ENCODE measurements at regions of chr12 and their contacts with region 1.

Region 1: DNA sequence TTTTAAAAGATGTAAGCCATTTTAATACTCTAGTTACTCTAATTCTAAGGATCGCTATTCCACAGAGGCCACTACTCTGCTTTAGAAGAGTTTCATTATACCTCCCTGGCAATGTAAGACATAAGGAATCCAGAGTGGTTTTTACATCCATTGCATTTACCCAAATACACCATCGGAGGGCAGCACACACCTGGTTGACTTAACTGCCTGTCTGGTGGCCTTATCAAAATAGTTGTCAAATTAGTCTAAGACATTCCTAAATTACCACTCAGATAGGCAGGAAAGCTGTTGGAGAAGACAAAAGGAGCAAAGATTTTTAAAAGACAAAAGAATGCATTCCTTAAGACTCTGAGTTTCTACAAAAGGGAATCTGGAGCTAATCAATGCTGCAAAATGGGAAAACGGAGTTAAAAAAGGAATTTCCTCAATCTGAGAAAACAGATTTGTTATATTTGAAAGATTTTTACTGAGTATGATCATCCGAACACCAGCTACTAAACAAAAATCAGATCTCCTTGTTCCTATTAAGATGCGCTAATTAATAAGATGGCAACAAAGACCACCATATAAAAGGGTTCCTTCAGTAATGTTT is 33.8 kb upstream of the FGD4 start:
- DNase-seq: peak; percentile 68
- H3K4me3 Mint-ChIP-seq: no peak overlapping the region
- H3K27ac Mint-ChIP-seq: peak overlapping the region; percentile 23
- H3K4me1 Mint-ChIP-seq: peaks cover 17% of the 10 kb centered on the region
- H3K27me3 Mint-ChIP-seq: no peaks in the 10 kb centered on the region
- CTCF ChIP-seq: peak; percentile 47

Region 2: DNA sequence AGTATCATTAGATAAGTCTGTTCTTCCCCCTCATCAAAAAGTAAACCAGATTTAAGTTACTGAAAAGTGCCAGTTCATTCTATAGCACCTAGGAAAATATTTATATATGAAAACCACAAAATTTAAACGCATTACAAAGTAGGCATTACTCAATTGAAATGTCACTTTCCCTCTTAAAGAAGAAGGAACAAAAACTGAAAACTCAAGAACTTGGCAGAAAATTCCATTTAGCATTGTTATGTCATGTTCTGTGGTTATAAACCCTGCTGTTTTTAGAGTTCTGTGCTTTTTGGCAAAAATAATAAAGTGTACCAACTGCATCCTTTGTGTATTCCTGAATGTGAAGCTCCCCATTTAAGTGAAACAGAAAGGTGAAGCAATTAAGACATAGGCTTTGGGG is 37.4 kb after region 1 on chr12:
- CTCF ChIA-PET with region 1: no interaction called
- intact Hi-C with region 1: no loop called
- DNase-seq: no peak
- H3K4me3 Mint-ChIP-seq: peak overlapping the region; percentile 98
- H3K27ac Mint-ChIP-seq: no peak overlapping the region
- H3K4me1 Mint-ChIP-seq: peaks cover 16% of the 10 kb centered on the region
- H3K27me3 Mint-ChIP-seq: no peaks in the 10 kb centered on the region
- CTCF ChIP-seq: no peak

Region 3: DNA sequence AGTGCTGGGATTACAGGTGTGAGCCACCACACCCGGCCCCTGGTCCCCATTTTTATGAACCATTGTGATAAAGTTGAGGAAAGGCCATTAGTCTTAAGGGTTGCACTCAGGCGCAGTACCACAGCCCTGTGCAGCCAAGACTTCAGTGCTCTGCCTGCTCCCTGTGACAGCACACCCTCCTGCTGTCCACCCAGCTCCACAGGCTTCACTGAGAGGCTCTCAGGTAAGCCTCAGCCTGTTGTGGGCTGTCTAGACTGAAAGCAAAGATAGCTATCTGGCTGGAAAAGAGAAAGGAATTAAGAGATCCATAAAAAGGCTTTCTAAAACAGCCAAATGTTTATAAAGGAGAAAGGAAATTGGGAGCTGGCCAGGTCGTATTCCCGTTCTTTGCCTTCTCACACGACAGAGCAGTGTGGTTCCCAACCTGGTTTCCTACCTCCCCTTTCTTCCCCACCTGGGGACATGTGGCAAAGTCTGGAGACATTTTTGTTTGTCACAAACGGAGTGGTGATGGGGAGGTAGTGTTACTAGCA is 294.4 kb after region 1 on chr12:
- CTCF ChIA-PET with region 1: interaction called, 4 read pairs
- intact Hi-C with region 1: loop called (anchors 1 kb)
- DNase-seq: no peak
- H3K4me3 Mint-ChIP-seq: no peak overlapping the region
- H3K27ac Mint-ChIP-seq: no peak overlapping the region
- H3K4me1 Mint-ChIP-seq: no peaks in the 10 kb centered on the region
- H3K27me3 Mint-ChIP-seq: no peaks in the 10 kb centered on the region
- CTCF ChIP-seq: no peak

Region 4: DNA sequence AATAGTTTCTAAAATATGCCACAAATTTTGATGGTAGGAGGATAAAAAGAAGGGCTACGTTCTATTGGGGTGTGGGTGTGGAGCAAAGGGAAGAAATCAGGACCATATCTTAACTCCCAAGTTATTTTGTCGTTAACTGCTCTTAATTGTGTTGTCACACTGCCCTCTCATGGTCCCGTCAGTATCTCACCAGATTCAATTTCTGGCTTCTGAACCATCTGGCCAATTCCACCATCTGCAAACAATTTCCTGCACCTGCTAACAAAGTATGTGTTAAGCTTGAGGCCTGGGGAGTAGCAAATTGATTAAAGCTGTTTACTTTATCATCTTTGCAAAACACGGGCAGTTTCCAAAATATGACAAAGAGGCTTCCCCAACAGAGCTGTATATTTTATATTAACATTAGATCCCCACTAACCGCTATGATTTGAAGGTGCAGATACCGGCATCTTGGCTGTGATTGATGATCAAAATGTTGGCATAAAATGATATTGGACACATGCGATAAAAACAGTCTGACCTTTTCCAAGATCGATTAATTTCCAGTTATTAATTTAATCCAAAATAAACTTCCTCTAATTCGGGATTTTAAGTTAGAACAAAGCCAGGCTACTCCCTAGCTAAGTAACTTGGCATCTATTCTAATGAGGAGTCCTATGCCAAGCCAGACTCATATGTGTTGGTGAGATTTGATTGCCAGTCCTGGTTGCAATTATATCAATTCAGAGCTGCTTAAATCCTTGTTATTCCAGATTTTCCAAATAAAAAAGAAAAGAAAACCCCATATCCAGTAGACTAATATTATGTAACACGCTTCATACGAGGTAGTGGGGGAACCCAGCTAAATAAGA is 306.6 kb after region 1 on chr12:
- CTCF ChIA-PET with region 1: no interaction called
- intact Hi-C with region 1: loop called (anchors 1 kb)
- DNase-seq: peak; percentile 48
- H3K4me3 Mint-ChIP-seq: no peak overlapping the region
- H3K27ac Mint-ChIP-seq: no peak overlapping the region
- H3K4me1 Mint-ChIP-seq: no peaks in the 10 kb centered on the region
- H3K27me3 Mint-ChIP-seq: no peaks in the 10 kb centered on the region
- CTCF ChIP-seq: peak; percentile 51

Region 5: DNA sequence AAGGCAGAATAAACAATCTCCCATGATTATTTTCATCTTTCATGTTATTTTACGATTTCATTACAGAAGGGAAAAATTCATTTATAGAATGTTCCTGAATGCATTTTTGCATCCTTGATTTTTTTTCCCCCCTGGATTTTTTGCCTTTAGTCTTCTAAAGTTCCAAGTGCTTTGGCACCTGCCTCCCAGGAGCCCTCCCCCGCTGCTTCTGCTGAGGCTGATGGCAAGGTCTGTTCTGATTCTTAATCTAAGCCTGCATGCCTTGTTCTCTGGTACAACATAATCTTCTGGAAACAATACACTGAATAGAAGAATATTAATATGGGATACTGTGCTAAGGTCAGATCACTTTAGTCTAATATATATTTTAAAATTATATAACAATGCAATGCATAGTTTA is 372.1 kb after region 1 on chr12:
- CTCF ChIA-PET with region 1: no interaction called
- intact Hi-C with region 1: loop called (anchors 5 kb)
- DNase-seq: no peak
- H3K4me3 Mint-ChIP-seq: no peak overlapping the region
- H3K27ac Mint-ChIP-seq: no peak overlapping the region
- H3K4me1 Mint-ChIP-seq: no peaks in the 10 kb centered on the region
- H3K27me3 Mint-ChIP-seq: no peaks in the 10 kb centered on the region
- CTCF ChIP-seq: no peak